Mammary epithelial cell (primary cell): ENCODE measurements at regions of chr20 and their contacts with region 1.

Region 1: GRCh38 chr20:13771853-13772453 is 12.8 kb downstream of the ESF1 start:
- DNase-seq: no peak
- H3K4me3 ChIP-seq: no peak overlapping the region
- H3K27ac ChIP-seq: no peak overlapping the region
- H3K4me1 ChIP-seq: no peaks in the 10 kb centered on the region
- H3K27me3 ChIP-seq: no peaks in the 10 kb centered on the region
- CTCF ChIP-seq: peak; percentile 46 to 49

Region 2: DNA sequence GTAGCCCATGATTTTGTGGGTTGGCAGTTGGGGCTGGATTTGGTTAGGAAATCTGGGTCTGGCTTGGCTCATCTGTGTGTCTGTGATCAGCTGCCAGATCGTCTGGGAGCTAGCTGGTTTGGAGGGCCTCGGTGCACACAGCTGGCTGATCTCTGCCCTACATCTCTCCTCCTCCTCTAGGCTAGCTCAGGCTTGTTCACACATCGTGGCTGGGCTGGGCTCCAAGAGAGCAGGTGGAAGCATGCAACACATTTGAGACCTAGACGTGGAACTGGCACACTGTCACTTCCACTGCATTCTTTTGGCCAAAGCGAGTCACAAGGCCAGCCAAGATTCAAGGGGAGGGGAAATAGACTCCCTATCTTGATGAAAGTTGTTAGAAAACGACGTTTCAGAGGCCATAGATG is 28.8 kb after region 1 on chr20:
- CTCF ChIA-PET with region 1: interaction called, 10 read pairs
- dilution Hi-C with region 1: no loop called
- in situ Hi-C with region 1: no loop called
- intact Hi-C with region 1: no loop called
- DNase-seq: peak; percentile 94
- H3K4me3 ChIP-seq: no peak overlapping the region
- H3K27ac ChIP-seq: no peak overlapping the region
- H3K4me1 ChIP-seq: peaks cover 16% of the 10 kb centered on the region
- H3K27me3 ChIP-seq: no peaks in the 10 kb centered on the region
- CTCF ChIP-seq: no peak

Region 3: DNA sequence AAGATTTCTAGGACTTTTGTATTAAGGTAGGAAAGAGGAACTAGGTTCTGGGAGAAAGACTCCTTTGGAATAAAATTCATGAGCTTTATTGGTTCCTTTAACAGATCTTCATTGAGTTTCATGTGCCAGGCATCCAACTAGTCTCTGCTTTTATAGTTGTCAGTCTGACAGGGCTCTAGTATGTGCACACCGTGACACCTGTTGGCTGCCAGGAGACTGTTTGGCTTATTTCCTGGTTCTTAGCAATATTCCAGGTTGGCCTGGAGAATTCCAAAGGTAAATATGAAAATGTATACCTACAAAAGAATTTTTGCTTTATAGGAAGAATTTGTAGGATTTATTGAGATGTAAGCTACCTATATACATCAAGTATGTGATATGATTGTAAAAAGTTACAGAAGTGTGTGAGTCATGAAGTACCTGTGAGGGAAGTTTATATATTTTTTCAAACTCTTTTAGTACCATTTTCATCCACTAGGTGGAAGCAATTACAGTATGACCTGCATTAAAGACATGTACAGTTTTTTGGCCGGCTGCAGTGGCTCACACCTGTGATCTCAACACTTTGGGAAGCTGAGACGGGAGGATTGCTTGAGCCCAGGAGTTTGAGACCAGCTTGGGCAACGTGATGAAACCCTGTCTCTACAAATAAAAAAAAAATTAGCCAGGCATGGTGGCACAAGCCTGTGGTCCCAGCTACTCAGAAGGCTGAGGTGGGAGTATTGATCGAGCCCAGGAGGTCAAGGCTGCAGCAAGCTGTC is 48.1 kb after region 1 on chr20:
- CTCF ChIA-PET with region 1: no interaction called
- dilution Hi-C with region 1: no loop called
- in situ Hi-C with region 1: no loop called
- intact Hi-C with region 1: no loop called
- DNase-seq: peak; percentile 74
- H3K4me3 ChIP-seq: no peak overlapping the region
- H3K27ac ChIP-seq: no peak overlapping the region
- H3K4me1 ChIP-seq: no peaks in the 10 kb centered on the region
- H3K27me3 ChIP-seq: no peaks in the 10 kb centered on the region
- CTCF ChIP-seq: peak; percentile 55 to 56